Right cardiac atrium (tissue), 5 donors: ENCODE measurements at regions of chr10 and their contacts with region 1.

Region 1: DNA sequence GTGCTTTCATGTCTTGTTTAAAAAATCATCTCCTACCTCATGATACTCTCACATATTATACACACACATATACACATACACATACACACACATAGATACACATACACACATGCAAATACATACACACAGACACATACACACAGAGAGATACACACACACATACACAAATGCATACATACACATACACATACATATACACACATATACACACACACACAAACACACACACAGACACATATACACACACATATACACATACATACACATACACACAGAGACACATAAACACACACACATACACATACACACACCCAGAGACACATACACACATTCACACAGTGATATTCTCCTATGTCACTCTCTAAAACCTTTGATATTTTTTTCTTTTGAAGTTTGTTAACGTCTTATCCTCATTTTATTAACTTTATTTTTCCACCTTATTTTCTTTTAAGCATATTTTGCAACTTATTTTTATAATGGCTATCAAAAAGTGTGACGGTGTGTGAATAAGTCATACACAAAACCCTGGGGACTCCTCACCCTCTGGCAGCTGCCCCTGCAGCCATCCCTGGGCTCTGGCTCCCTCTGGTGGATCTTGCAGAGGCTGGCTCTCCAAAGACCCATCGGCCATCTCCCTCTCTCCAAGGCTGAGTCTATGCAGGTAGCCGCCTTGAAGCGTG is 3.9 kb upstream of the C10orf120 start:
- DNase-seq: peak; percentile 71 to 88 (median 85)
- ATAC-seq: peak; percentile 90 to 91
- H3K4me3 ChIP-seq: no peak overlapping the region
- H3K27ac ChIP-seq: no peak overlapping the region
- H3K4me1 ChIP-seq: no peaks in the 10 kb centered on the region
- H3K27me3 ChIP-seq: no peaks in the 10 kb centered on the region

Region 2: DNA sequence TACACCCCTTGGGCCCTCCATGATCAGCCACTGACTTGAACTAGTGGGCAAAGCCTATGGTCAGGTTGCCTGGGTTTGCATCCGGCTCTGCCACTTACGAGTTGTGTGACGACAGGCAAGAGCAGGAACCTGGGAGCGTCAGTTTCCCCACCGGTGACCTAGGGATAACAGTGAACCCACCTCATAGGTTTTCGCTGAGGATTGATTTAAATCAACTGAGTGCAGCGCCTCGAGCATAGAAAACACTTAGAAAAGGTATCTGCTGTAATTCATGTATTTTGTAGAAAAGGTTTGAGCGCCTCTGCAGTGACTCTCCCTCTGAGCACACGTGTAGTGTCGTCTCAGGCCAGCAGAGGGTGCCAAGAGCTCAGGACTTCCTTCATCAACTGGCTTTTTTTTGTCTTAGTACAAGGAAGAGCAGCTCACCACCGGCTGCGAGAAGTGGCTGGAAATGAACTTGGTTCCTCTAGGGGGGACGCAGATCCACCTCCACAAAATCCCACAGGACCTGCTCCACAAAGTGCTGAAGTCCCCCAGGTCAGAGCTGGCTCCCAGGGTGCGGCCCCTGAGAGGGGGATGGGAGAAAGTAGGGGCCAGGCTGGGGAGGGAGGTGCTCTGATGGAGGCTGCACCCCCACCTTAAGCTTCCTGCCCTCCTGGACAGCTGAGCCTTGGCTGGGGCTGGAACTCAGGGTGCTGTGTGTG is 404.8 kb before region 1 on chr10:
- intact Hi-C with region 1: loop called in 1 of 4 experiments (anchors 5 kb)
- DNase-seq: peak; percentile 66 to 90 (median 87)
- ATAC-seq: peak; percentile 82 to 86
- H3K4me3 ChIP-seq: no peak overlapping the region
- H3K27ac ChIP-seq: no peak overlapping the region
- H3K4me1 ChIP-seq: no peaks in the 10 kb centered on the region
- H3K27me3 ChIP-seq: no peaks in the 10 kb centered on the region

Region 3: DNA sequence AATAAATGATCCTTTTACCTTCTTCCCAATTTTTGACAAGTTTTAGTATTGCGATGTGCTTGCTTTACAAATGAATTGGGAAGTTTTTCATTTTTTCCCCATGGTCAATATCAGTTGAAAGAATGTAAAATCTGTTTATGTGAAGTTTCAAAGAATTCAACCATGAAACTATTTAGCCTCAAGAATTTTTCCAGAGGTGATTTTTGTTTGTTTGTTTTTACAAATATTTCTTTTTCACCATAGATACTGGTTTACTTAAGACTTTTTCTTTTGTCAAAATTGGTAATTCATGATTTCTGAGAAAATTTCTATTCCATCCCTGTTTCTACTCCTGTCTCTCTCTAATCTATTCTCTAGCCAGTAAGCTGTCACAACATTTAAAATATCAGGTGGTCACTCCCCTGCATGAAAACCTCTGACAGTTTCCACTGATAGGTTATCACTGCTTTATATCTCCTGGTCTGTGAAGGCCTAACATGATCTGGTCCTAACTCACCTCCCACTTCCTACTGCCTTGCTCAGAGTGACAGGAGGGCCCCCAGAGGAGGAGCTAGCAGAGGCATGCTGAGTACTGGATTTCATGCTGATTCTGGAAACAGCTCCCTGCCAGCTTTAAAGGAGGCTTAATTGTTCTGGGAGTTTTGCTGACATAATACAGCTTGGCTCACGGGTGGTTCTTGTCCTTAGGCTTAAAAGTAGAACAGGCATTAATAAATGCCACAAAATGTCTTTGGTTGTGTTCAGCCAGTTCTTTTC is 256.7 kb before region 1 on chr10:
- intact Hi-C with region 1: loop called in 1 of 4 experiments (anchors 10 kb)
- DNase-seq: no peak
- ATAC-seq: peak; percentile 60 to 62
- H3K4me3 ChIP-seq: no peak overlapping the region
- H3K27ac ChIP-seq: no peak overlapping the region
- H3K4me1 ChIP-seq: peaks cover 2% of the 10 kb centered on the region
- H3K27me3 ChIP-seq: no peaks in the 10 kb centered on the region

Region 4: DNA sequence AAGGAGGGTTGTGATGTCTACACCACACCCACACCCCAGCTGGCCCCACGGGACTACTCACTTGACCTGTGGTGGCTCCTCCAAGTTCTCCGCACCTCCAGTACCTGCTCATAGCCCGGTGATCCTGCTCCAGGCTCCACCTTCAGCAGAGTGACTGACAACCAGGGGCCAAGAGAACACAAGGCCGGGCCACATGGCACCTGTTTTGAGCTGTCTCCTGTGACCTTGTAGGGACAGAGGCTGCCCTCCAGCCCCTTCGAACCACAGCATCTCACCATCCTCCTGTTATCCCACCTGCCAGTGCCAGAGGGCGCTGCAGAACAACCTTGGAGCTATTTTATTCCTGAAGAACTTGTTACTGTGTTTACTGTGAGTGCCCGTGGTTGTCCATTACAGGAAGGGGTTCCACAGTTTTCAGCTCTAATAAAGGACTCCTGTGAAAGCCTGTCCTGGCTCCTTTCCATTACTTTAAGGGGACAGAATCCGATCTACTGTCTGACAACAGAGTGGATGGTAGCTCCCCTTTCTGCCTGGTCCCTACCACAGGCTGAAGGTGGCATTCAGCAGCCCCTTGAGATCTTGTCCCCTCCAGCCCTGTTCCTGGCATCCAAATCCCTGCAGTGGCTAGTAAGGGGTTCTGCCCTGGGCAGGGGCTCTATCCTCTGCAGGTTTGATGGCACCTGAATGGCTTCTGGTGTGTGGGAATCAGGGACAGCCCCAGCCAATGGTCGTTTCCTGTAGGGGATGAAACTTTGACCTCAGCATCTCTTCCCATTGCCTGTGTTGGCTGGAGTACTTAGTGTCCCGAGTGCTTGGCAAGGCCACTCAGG is 54.8 kb before region 1 on chr10:
- intact Hi-C with region 1: loop called (anchors 2 to 5 kb)
- DNase-seq: peak; percentile 48 to 81 (median 71)
- ATAC-seq: peak; percentile 59 to 72
- H3K4me3 ChIP-seq: no peak overlapping the region
- H3K27ac ChIP-seq: no peak overlapping the region
- H3K4me1 ChIP-seq: no peaks in the 10 kb centered on the region
- H3K27me3 ChIP-seq: no peaks in the 10 kb centered on the region

Region 5: GRCh38 chr10:122854648-122855047 is 151.1 kb after region 1 on chr10:
- intact Hi-C with region 1: no loop called
- DNase-seq: no peak
- ATAC-seq: no peak
- H3K4me3 ChIP-seq: no peak overlapping the region
- H3K27ac ChIP-seq: no peak overlapping the region
- H3K4me1 ChIP-seq: no peaks in the 10 kb centered on the region
- H3K27me3 ChIP-seq: no peaks in the 10 kb centered on the region